Right ventricle myocardium superior (tissue), 1 donor: ENCODE measurements at regions of chr6 and their contacts with region 1.

Region 1: DNA sequence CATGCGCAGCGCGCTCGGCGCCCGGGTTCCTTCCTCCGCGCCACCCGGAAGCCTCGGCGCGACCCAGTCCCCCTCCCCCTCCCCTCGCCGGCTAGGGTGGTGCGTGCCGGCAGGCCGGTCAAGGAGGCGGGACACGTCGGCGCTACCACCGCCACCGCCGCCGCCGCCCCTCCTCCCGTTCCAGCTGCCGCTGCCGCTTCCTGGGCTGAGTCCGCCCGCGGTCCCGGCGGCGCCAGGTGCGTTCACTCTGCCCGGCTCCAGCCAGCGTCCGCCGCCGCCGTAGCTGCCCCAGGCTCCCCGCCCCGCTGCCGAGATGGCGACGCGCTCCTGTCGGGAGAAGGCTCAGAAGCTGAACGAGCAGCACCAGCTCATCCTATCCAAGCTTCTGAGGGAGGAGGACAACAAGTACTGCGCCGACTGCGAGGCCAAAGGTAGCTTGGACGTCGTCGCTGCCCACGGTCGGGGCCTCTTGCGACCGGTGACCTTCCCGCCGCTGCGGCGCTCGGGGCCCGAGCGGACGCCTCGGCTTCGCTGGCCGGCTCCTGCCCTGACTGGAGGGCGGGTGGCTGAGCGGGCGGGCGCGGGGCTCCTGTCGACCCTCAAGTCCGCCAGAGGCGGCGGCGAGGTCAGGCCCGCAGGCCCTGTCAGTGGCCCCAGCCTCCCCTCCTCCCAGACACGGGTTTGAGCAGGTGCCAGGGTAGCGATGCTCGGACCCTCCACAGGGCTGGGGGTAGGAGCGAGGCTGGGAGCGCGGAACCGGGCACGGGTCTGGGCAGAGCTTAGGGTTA is at the start of gene SMAP1:
- DNase-seq: peak; percentile 97
- ATAC-seq: peak; percentile 99
- total RNA-seq, gene SMAP1: 27.7 TPM

Region 2: DNA sequence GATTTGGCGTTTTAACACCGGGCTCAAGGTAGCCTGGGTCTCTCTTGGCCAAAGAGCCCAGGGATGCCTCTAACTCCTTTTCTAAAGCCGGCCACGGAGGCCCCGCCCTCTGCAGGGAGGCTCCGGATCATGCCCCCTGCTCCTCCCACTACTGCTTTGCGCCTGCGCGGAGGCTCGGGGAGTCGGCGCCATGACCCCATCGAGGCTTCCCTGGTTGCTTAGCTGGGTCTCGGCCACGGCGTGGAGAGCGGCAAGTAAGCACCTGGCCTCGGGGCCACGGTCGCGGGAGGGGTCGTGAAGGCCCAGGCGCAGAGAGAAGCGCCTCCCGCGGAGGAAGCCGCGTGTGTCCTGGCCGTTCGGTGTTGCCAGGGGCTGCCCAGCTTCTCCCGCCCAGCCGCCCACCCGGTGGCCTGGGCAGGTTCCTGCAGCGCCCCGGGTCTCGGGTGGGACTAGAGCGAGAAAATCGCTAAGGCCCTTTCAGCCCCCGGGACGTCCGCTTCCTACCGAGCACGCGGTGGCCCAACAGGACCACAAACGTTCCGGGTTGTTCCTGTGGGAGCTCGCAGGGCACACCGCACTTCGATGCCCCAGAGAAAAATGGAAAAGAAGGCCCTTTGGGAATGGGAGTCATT is 101.0 kb before region 1 on chr6 and contains the start of gene SDHAF4:
- intact Hi-C with region 1: loop called (anchors 5 kb)
- DNase-seq: peak; percentile 97
- ATAC-seq: peak; percentile 100
- total RNA-seq, gene SDHAF4: 17.8 TPM